H1 (cell line): ENCODE measurements at regions of chr2 and their contacts with region 1.

Region 1: DNA sequence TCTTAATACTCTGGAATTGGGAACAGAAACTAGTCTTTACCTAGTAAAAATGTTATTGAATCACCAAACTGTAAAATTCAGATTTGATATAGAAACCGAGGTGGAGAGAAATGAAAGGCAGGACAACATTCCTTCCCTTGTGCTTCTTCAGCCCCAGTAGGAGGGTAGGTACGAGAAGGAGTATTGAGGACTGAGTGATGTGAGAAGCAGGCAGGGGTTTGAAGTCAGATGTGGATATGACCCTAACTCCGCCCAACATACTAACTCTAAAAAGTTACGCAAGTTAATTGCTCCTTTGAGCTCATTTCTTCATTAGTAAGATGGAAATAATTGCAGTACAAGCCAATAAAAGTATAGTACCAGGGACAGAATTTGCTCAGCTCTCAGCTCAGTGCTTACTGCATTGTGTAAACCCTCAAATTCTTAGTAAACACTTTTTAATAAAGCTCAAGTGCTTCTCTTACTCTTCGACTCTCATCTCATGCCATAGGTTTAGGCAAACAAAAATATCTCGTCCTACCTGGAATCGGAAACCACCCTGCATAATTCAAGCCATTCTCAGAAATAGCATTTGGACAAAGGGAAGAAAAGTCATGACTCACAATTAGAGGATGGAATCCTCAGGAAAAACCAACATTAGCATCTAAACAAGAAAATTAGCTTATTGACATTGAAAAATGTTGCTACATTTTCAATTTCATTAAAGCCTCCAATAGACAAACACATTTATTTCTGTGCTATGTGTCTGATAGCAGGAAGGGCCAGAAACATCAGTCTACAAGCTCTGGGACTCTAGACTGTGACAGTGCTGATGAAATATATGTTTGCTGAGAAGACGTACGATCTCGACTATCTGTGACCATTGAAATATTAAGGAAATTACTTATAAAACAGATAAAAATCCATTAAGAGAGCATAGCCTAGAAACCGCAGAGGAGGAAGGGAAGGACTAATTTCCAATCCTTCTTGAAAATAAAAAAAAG is 161.3 kb downstream of the HNMT start:
- DNase-seq: no peak
- H3K4me3 ChIP-seq: no peak overlapping the region
- H3K27ac ChIP-seq: no peak overlapping the region
- H3K4me1 ChIP-seq: peaks cover 0 to 10% (median 5%) of the 10 kb centered on the region in 4 experiments; a peak in 6 of 7 replicates
- H3K27me3 ChIP-seq: no peaks in the 10 kb centered on the region
- CTCF ChIP-seq: no peak
- EP300 ChIP-seq: no peak
- POLR2A ChIP-seq: no peak
- RAD21 ChIP-seq: no peak

Region 2: DNA sequence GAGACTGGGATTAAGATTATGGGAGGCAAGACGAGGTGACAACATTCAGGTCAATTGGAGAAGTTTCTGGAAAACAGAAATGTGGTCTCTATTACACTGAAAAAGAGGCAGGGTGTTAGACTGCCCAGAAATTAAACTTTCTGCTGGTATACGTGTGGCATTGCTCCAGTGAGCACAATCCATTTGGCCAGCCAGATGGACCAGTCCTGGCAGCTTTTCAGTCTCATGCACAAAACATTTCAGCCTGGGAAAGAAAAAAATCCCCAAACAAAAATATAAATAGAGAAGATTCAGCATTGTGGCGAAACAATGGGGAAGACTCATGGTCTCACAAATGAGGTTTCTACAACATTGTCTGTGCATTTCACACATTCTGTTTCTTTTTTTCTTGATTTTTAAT is 47.4 kb before region 1 on chr2:
- CTCF ChIA-PET with region 1: no interaction called
- POLR2A ChIA-PET with region 1: no interaction called
- DNase-seq: no peak
- H3K4me3 ChIP-seq: no peak overlapping the region
- H3K27ac ChIP-seq: no peak overlapping the region
- H3K4me1 ChIP-seq: no peaks in the 10 kb centered on the region
- H3K27me3 ChIP-seq: peaks cover 0 to 1% (median 0%) of the 10 kb centered on the region in 4 experiments; a peak in 1 of 7 replicates
- CTCF ChIP-seq: no peak
- EP300 ChIP-seq: no peak
- POLR2A ChIP-seq: no peak
- RAD21 ChIP-seq: no peak

Region 3: DNA sequence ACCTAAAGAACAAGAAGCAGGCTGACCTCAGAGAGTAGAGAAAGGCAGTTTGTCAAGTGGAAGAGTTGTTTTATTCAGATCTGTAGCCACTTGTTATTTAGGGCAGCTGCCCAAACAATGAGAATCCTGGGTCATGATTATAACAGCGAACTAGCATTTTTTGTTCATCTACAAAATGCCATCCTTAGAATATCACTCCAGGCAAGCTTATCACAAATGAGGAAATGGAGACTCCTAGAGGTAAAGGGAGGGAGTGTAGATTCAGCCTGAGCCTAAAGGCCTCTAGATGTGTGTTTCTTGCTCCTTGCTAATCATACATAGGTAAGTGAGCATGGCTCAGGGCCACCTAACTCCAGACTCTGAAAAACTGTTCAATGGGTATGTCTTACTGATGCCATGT is 35.3 kb before region 1 on chr2:
- CTCF ChIA-PET with region 1: interaction called, 11 read pairs
- POLR2A ChIA-PET with region 1: no interaction called
- DNase-seq: no peak
- H3K4me3 ChIP-seq: no peak overlapping the region
- H3K27ac ChIP-seq: no peak overlapping the region
- H3K4me1 ChIP-seq: peaks cover 0 to 2% (median 0%) of the 10 kb centered on the region in 4 experiments; a peak in 1 of 7 replicates
- H3K27me3 ChIP-seq: peaks cover 0 to 2% (median 0%) of the 10 kb centered on the region in 4 experiments; a peak in 1 of 7 replicates
- CTCF ChIP-seq: peak in 2 of 3 experiments; percentile 52 to 70; a peak in 3 of 4 replicates
- EP300 ChIP-seq: no peak
- POLR2A ChIP-seq: no peak
- RAD21 ChIP-seq: peak; percentile 61 to 76